Activated naive CD4-positive, alpha-beta T cell treated with anti-CD3 and anti-CD28 coated beads for 36 hours (primary cell): ENCODE measurements at regions of chr19 and their contacts with region 1.

Region 1: DNA sequence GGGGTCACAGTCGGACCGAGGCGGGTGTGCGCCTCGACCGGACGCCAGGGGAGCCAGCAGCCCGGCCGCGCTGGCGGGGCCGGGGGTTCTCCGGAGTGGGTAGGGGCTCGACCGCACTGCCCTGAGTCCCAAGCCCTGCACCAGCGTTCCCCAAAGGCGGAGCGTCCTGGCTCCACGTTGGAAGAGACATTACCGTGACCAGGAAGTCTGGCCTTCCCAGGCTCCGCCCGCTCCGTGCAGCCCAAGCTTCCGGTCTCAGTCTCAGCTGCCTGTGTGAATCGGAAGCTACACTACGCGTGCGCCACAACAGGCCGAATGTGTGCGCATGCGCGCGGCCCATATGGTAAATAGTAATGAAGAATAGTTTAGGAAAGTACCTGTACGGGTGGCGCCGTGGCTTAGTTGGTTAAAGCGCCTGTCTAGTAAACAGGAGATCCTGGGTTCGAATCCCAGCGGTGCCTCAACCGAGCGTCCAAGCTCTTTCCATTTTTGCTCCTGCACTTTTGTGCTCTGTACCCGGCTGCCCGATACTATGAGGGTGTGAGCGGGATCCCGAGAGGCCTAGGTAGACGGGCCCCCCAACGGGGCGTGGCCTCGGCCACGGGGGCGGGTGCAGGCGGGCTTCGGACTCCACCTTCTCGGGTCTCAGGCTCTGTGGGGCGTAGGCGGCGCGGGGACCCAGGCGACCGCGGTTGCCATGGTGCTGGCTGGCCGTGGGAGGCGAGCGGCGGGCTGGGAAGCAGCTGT is 17.3 kb upstream of the LRP3 start:
- DNase-seq: peak; percentile 96
- H3K4me3 Mint-ChIP-seq: peak overlapping the region; percentile 98
- H3K27ac Mint-ChIP-seq: peak overlapping the region; percentile 95
- H3K4me1 Mint-ChIP-seq: peaks cover 29% of the 10 kb centered on the region
- H3K27me3 Mint-ChIP-seq: peaks cover 2% of the 10 kb centered on the region

Region 2: GRCh38 chr19:32674959-32675719 is 501.7 kb before region 1 on chr19 and contains the start of gene ANKRD27:
- CTCF ChIA-PET with region 1: no interaction called
- intact Hi-C with region 1: loop called (anchors 5 kb)
- DNase-seq: peak; percentile 97
- H3K4me3 Mint-ChIP-seq: peak within 1 kb of the TSS; percentile 89
- H3K27ac Mint-ChIP-seq: peak within 1 kb of the TSS; percentile 46
- H3K4me1 Mint-ChIP-seq: peaks cover 22% of the 10 kb centered on the region
- H3K27me3 Mint-ChIP-seq: peaks cover 14% of the 10 kb centered on the region
- total RNA-seq, gene ANKRD27: 28.8 to 29.7 TPM

Region 3: DNA sequence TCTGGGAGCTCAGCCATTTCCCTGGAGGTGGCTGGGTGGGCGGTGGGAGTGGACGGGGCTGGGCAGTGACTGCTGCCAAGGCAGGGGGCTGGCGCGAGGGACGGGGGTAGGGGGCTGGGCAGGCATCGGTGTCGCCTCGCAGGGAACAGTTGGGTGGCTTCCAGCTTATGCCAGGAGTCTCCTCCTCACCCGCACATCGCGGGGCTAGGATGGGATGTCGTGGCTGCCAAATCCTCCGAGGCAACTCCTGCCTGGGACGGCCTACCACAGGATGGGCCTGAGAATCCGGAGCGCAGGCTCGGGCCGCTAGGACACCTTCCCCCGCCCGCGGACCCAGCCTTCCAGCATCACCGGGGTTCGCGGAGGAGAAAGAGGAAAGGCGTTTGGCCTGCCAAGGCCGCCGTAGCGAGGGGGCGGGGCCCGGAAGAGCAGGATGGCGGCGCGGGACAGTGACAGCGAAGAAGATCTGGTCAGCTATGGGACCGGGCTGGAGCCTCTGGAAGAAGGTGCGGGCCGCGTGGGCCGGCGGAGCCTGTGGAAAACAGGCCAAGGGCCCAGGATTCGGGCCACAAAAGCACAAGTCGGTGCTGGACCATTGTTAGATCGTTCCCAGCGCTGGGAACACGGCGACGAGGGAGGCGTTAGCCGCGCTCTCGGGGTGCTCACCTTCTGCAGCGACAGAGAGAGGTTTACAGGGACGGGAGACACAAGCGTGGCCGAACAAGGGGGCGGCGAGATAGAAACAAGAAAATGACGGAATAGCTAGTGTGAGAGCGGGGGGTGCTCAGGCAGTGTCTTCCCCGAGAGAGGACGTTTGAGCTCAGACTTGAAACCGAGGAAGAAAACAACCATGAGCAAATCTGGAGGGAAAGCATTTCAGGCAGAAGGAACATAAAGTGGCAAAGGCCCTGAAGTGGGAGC is 95.8 kb before region 1 on chr19 and contains the start of gene GPATCH1:
- CTCF ChIA-PET with region 1: no interaction called
- intact Hi-C with region 1: loop called (anchors 1 kb)
- DNase-seq: peak; percentile 89
- H3K4me3 Mint-ChIP-seq: peak within 1 kb of the TSS; percentile 99
- H3K27ac Mint-ChIP-seq: peak within 1 kb of the TSS; percentile 88
- H3K4me1 Mint-ChIP-seq: peaks cover 25% of the 10 kb centered on the region
- H3K27me3 Mint-ChIP-seq: no peaks in the 10 kb centered on the region
- total RNA-seq, gene GPATCH1: 8.3 to 9.1 TPM

Region 4: GRCh38 chr19:33143897-33144405 is 32.9 kb before region 1 on chr19:
- CTCF ChIA-PET with region 1: interaction called, 29 read pairs
- intact Hi-C with region 1: loop called (anchors 2 kb)
- DNase-seq: peak; percentile 69
- H3K4me3 Mint-ChIP-seq: no peak overlapping the region
- H3K27ac Mint-ChIP-seq: no peak overlapping the region
- H3K4me1 Mint-ChIP-seq: peaks cover 4% of the 10 kb centered on the region
- H3K27me3 Mint-ChIP-seq: no peaks in the 10 kb centered on the region

Region 5: GRCh38 chr19:33302175-33302973 is 125.5 kb after region 1 on chr19 and contains the start of gene CEBPA:
- CTCF ChIA-PET with region 1: no interaction called
- intact Hi-C with region 1: loop called (anchors 5 kb)
- DNase-seq: peak; percentile 52
- H3K4me3 Mint-ChIP-seq: peak within 1 kb of the TSS; percentile 42
- H3K27ac Mint-ChIP-seq: no peak within 1 kb of the TSS
- H3K4me1 Mint-ChIP-seq: no peaks in the 10 kb centered on the region
- H3K27me3 Mint-ChIP-seq: peaks cover 35% of the 10 kb centered on the region
- total RNA-seq, gene CEBPA: 0.10 TPM